GM10248 (cell line): ENCODE measurements at regions of chr17 and their contacts with region 1.

Region 1: GRCh38 chr17:28902819-28903545 is at the start of gene DHRS13:
- DNase-seq: peak; percentile 93
- CTCF ChIP-seq: peak; percentile 92

Region 2: DNA sequence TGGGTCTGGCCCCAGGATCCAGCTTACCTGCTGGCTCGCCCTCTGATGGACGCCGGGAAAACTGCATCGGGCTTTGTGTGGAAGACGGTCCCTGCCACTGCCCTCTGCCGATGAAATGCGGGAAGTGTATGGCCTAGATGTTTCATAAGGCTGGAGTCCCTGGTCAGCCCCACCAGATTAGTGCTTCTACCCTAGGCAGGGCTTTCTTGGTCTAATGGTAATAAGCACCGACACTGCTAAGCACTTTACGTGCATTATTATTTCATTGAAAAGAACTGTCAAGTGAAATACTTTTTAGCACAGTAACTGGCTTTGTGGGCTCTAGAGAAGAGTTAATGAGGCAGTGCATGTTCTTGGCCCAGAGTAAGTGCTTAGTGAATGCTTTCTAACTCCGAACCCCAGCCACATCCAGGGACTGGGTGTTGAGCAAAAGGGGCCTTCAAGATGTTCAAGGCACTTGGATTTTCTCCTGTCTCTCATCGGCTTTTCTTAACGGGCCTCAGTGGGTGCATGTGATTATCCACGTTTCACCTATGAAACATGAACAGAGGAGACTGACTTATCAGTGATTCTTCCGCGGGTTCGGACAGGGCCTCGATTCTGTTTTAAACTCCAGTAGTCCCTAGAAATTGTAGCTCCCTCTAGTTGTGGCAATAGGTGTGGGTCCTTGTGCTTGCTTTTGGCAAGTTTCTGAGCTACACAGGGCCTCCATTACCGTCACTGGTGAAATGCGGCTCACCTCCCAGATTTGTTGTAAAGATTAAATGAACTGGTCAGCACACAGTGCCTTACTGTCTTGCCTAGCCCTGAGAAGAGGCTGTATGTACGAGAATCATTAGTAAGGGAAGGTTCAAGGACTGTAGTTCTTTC is 152.6 kb before region 1 on chr17:
- CTCF ChIA-PET with region 1: interaction called, 34 read pairs
- POLR2A ChIA-PET with region 1: interaction called, 4 read pairs
- DNase-seq: peak; percentile 84
- CTCF ChIP-seq: peak; percentile 100

Region 3: DNA sequence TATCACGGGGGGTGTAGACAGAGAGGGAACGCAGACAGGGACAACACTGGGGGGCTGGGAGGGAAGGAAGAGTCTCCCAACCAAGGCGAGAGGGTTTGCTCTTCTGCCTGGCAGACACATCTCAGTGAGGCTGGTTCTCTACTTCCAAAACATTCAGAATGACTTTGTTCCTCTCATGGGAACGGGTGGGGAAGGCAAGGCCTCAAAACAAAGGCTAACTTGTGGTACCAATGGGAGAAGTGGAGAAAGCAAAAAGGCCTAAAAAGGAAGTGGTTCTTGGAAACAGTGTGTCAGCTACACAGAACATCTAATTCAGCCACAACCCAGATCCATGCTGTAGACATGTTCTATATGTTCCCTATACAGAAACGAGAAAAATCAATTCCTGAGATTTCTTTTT is 13.0 kb before region 1 on chr17:
- CTCF ChIA-PET with region 1: interaction called, 21 read pairs
- POLR2A ChIA-PET with region 1: no interaction called
- DNase-seq: no peak
- CTCF ChIP-seq: no peak

Region 4: DNA sequence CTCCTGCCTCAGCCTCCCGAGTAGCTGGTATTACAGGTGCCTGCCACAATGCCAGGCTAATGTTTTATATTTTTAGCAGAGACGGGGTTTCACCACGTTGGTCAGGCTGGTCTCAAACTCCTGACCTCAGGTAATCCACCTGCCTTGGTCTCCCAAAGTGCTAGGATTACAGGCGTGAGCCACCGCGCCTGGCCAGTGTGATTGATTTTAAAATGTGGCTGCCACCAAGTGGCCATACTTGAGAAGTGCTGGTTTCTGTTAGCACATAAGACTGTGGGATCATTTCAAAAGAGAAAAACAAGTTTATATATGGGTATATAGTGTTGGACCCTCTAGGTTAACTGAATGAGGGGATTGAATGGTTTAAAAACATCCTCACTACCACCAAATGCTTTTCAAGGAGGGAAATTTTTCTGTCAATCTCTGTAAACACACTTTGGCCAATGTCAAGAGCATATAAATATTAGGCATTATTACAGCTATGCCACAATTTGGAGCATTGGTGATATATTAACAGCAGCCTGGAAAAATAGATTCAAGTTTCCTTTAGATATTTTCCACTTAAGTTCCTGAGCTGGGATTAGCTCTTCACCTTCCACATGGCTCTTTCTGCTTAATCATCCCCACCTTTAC is 13.4 kb after region 1 on chr17:
- CTCF ChIA-PET with region 1: interaction called, 42 read pairs
- POLR2A ChIA-PET with region 1: no interaction called
- DNase-seq: no peak
- CTCF ChIP-seq: peak; percentile 68

Region 5: GRCh38 chr17:28925912-28926365 is 23.0 kb after region 1 on chr17:
- CTCF ChIA-PET with region 1: interaction called, 49 read pairs
- POLR2A ChIA-PET with region 1: no interaction called
- DNase-seq: peak; percentile 51
- CTCF ChIP-seq: no peak

Region 6: DNA sequence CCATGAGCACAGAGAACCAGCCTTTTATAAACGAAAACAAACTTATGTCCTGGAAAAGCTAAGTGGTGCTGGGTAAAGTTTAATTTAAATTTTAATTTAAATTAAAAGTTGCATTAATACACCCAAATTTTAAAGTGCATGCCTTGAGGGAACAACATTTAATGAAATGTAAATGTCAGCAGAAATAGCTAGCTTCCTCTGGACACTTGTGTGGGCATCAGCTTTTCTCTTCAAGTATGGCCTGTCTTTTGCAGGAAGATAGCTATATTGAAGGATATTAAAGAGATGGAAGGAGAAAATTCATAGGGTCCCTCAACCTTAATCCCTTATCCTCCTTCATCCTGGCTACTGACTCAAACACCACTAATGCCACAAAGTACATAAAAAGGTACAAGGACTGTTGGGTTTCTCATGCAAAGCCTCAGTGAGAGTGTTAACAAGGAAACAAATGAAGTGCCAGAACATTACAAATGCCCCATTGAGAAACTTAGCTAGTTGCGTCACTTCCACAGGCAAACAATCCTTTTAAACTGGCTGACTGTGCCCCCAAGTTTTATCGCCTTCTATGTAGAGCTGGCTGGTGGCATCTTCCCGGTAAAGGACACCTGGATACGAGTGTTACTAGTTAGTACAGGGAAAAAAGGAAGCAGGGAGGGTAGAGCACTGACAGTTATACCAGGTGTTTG is 34.2 kb after region 1 on chr17:
- CTCF ChIA-PET with region 1: interaction called, 13 read pairs
- POLR2A ChIA-PET with region 1: no interaction called
- DNase-seq: no peak
- CTCF ChIP-seq: no peak

Region 7: GRCh38 chr17:28946239-28946638 is 43.3 kb after region 1 on chr17:
- CTCF ChIA-PET with region 1: interaction called, 11 read pairs
- POLR2A ChIA-PET with region 1: no interaction called
- DNase-seq: no peak
- CTCF ChIP-seq: no peak